A673 (cell line): ENCODE measurements at regions of chr1 and their contacts with region 1.

Region 1: DNA sequence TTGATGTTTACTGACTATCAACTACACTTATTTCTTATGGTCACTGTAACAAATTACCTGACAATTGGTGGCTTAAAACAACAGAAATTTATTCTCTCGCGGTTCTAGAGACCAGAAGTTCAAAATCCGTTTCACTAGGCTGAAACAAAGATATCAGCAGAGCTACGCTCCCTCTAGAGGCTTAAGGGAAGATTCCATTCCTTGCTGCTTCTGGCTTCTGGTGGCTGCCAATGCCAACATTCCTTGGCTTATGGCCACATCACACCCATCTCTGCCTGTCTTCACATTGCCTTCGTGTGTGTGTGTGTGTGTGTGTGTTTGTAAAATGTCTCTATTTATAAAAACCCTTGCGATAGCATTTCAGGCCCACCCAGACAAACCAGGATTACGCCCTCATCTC is 66.4 kb downstream of the LMX1A start:
- DNase-seq: peak; percentile 42
- H3K4me3 ChIP-seq: no peak overlapping the region
- H3K27ac ChIP-seq: no peak overlapping the region
- H3K4me1 ChIP-seq: peaks cover 34% of the 10 kb centered on the region
- H3K27me3 ChIP-seq: no peaks in the 10 kb centered on the region
- CTCF ChIP-seq: peak; percentile 37

Region 2: DNA sequence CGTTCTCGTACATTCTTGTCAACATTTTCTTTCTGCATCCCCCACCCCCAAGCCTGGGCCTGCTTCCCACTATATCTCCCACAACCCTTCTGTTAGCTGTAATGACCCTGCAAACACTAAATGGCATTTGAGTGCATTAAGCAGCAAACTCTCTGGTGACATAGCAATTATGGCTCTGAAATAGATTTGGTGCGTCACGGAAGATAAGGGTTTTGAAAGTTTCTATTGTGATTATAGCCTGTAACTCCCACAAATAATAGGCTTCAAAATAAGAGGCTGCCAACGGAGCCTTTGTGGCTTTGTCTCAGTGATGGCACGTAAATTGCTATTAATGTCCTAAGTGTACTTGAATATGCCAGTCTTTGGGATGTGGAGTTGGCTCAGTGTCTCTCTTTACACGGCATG is 453.5 kb before region 1 on chr1:
- CTCF ChIA-PET with region 1: no interaction called
- POLR2A ChIA-PET with region 1: no interaction called
- intact Hi-C with region 1: loop called (anchors 10 kb)
- DNase-seq: peak; percentile 39
- H3K4me3 ChIP-seq: no peak overlapping the region
- H3K27ac ChIP-seq: no peak overlapping the region
- H3K4me1 ChIP-seq: peaks cover 6% of the 10 kb centered on the region
- H3K27me3 ChIP-seq: no peaks in the 10 kb centered on the region
- CTCF ChIP-seq: no peak

Region 3: DNA sequence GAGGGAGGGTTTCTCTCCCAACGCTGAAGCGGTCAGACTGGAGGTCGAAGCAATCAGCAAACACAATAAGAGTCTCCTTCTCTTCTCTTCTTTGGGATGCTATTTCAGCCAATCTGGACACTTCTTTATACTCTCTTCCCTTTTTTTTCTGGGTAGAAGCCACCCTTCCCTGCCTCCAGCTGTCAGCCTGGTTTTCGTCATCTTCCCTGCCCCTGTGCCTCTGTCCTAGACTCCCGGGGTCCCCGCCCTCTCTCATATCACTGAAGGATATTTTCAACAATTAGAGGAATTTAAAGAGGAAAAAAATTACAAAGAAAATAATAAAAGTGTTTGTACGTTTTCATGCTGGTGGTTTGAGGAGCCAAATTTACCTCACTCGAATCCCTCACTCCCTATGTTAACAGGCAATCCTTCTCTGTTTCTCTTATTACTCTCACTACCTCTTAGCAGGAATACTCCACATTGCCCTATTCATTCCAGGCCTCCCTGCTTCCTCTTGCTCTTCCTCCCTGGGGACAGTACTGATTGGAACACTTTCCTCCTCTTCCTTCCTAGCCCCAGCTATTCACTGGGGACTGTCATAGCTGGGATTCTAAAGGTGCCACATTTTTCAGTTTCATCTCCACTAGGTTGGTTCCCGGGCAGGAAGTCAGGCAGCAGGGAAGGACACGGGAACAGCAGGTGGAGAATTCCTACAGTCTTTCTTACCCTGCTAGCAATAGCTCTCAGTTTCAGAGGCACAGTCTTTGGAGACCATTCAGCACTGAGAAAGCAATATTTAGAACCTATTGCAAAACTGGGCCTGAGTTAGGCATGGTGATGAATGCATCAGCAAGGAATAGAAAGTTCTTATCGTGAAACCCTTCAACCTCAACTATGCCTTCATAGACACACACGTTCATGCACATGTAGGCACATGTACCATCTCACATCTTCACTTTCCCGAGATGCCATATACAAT is 443.1 kb before region 1 on chr1:
- CTCF ChIA-PET with region 1: no interaction called
- POLR2A ChIA-PET with region 1: no interaction called
- intact Hi-C with region 1: no loop called
- DNase-seq: peak; percentile 24
- H3K4me3 ChIP-seq: no peak overlapping the region
- H3K27ac ChIP-seq: no peak overlapping the region
- H3K4me1 ChIP-seq: no peaks in the 10 kb centered on the region
- H3K27me3 ChIP-seq: no peaks in the 10 kb centered on the region
- CTCF ChIP-seq: no peak